ENCODE measurements at regions of chr10 and their contacts with region 1.

Region 1: GRCh38 chr10:49281461-49281860 is 17.5 kb upstream of the C10orf71 start:
- DNase-seq: peak; percentile 83
- ATAC-seq: peak; percentile 97
- H3K4me3 Mint-ChIP-seq: no peak overlapping the region
- H3K27ac Mint-ChIP-seq: no peak overlapping the region
- H3K4me1 Mint-ChIP-seq: no peaks in the 10 kb centered on the region
- H3K27me3 Mint-ChIP-seq: no peaks in the 10 kb centered on the region
- CTCF ChIP-seq: peak; percentile 88

Region 2: DNA sequence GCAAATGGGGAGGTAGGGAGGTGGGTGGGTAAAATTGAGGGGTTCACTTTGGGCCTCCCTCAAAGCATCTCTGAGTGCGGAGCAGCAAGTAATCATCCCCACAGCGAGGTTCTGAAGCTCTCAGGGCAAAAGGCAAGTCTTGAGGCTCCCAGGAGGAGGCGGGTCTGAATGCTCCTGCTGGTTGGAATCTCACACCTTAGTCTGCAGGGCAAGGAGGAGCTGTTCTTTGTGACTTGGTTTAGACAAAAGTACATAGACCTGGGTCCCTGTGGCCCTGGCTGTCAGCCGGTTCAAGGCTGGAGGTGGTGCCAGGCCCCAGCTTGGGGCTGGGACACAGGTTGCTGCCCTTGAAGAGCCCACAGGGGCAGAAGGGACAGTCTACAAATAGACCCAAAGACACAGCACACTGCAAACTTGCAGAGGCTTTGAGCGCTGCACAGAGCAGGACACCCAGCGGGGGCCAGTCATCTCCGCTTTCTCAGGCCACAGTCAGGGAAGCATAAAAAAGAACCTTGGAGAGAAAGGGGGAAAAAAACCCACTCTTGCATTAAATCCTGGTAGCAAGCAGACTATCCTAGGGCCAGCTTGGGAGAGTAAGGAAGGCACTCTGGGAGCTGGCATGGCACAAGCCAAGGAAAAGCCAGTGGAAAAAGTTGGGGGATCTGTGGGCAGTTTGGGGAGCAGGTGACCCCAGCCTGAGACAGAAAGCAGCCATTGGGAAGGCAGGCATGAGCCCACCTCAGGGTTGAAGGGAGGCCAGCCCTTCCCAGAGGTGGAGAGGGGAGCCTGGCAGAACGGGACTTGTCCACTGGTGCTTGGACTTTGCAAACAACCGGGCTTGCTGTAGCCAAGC is 16.6 kb after region 1 on chr10:
- CTCF ChIA-PET with region 1: interaction called, 14 read pairs
- POLR2A ChIA-PET with region 1: no interaction called
- DNase-seq: no peak
- ATAC-seq: peak; percentile 43; the same call in 1 of the 2 replicates
- H3K4me3 Mint-ChIP-seq: no peak overlapping the region
- H3K27ac Mint-ChIP-seq: no peak overlapping the region
- H3K4me1 Mint-ChIP-seq: peaks cover 27% of the 10 kb centered on the region
- H3K27me3 Mint-ChIP-seq: no peaks in the 10 kb centered on the region; the same call in 1 of the 2 replicates
- CTCF ChIP-seq: no peak

Region 3: GRCh38 chr10:49309626-49310411 is 28.4 kb after region 1 on chr10:
- CTCF ChIA-PET with region 1: no interaction called
- POLR2A ChIA-PET with region 1: no interaction called
- DNase-seq: no peak
- ATAC-seq: no peak
- H3K4me3 Mint-ChIP-seq: no peak overlapping the region
- H3K27ac Mint-ChIP-seq: no peak overlapping the region
- H3K4me1 Mint-ChIP-seq: no peaks in the 10 kb centered on the region
- H3K27me3 Mint-ChIP-seq: no peaks in the 10 kb centered on the region
- CTCF ChIP-seq: no peak

Measured in WTC11 (cell line).